K562 (cell line): ENCODE measurements at regions of chr9 and their contacts with region 1.

Region 1: GRCh38 chr9:76810377-76810957 is 46.2 kb downstream of the PCA3 start:
- DNase-seq: peak; percentile 10 to 51 (median 18)
- ATAC-seq: peak; percentile 72
- H3K4me3 ChIP-seq: no peak overlapping the region
- H3K27ac ChIP-seq: no peak overlapping the region
- H3K4me1 ChIP-seq: no peaks in the 10 kb centered on the region
- H3K27me3 ChIP-seq: no peaks in the 10 kb centered on the region; a peak in 1 of 5 replicates
- CTCF ChIP-seq: peak; percentile 55 to 70 (median 61); a peak in 5 of 6 replicates
- EP300 ChIP-seq: no peak
- POLR2A ChIP-seq: no peak
- RAD21 ChIP-seq: peak; percentile 61 to 81

Region 2: GRCh38 chr9:76987594-76988200 is 177.2 kb after region 1 on chr9:
- CTCF ChIA-PET with region 1: interaction called, 3 read pairs
- POLR2A ChIA-PET with region 1: no interaction called
- in situ Hi-C with region 1: loop called (anchors 25 kb)
- intact Hi-C with region 1: loop called (anchors 2 kb)
- DNase-seq: peak; percentile 10 to 24 (median 12)
- ATAC-seq: peak; percentile 67
- H3K4me3 ChIP-seq: no peak overlapping the region
- H3K27ac ChIP-seq: no peak overlapping the region
- H3K4me1 ChIP-seq: no peaks in the 10 kb centered on the region
- H3K27me3 ChIP-seq: no peaks in the 10 kb centered on the region; a peak in 1 of 5 replicates
- CTCF ChIP-seq: peak; percentile 42 to 57 (median 48)
- EP300 ChIP-seq: no peak
- POLR2A ChIP-seq: no peak
- RAD21 ChIP-seq: peak; percentile 42 to 67

Region 3: GRCh38 chr9:77149879-77150278 is 339.4 kb after region 1 on chr9:
- CTCF ChIA-PET with region 1: no interaction called
- POLR2A ChIA-PET with region 1: no interaction called
- in situ Hi-C with region 1: no loop called
- intact Hi-C with region 1: loop called (anchors 1 kb)
- DNase-seq: no peak
- ATAC-seq: no peak
- H3K4me3 ChIP-seq: no peak overlapping the region
- H3K27ac ChIP-seq: no peak overlapping the region
- H3K4me1 ChIP-seq: no peaks in the 10 kb centered on the region
- H3K27me3 ChIP-seq: no peaks in the 10 kb centered on the region; a peak in 1 of 5 replicates
- CTCF ChIP-seq: no peak
- EP300 ChIP-seq: no peak
- POLR2A ChIP-seq: no peak
- RAD21 ChIP-seq: no peak